ENCODE measurements at regions of chr3 and their contacts with region 1.

Region 1: DNA sequence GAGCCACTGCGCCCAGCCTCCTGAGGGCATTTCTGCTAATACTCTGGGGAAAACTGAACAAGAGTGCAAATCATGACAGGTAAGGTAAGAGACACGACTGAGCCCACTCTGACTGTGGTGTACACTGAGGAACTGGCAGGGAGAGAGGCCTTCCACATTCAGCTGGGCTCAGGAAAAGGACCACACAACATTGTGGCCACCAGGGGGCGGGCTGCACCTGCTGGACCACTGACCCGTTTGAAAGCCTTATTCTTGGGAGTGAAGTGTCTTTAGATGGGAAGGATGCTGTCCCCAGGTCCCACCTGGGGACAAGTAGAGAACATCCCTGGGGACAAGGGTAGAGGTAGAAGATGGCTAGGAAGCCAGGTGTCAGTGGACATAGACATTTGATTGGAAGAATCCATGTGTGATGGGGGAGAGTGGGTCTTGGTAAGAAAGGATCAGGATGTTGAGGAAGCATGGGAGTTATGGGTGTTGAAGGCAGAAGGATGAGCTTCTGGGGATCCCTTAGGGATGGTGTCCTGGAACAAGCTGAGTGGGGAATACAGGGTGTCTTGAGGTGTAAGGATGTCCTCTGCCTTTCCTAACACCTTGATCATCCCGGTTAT is 6.2 kb upstream of the CTDSPL start:
- DNase-seq: peak; percentile 79

Region 2: GRCh38 chr3:37872413-37873160 is 17.1 kb after region 1 on chr3:
- CTCF ChIA-PET with region 1: no interaction called
- POLR2A ChIA-PET with region 1: no interaction called
- DNase-seq: no peak

Region 3: DNA sequence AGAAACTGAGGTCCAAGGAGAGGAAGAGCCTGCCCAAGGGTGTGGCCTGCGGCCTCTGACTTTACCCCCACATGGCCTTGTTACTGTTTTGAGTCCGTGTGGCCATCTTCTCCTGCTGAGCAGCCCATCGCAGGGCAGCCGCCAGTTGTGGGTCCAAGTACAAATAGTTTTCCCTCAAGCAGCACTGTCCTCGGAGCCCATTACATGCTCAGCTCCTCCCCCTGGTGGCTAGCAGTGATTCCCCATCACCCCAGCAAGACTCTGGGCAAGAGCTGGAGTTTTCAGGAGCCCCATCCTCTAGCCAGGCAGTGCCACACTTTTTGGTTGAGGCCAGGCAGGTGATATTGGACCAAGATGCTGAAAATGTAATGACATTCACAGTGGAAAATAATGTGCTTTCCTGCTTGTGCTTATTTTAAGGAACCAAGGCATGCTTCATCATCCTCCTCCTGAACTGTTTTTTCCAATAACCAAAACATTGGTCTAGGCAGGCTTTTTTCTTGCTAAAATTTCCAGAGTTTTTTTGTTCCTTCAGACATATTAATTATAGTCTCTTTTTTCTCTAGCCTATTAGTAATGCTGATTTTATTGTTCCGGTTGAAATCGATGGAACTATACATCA is 111.9 kb after region 1 on chr3:
- CTCF ChIA-PET with region 1: interaction called, 56 read pairs
- POLR2A ChIA-PET with region 1: no interaction called
- DNase-seq: peak; percentile 76

Region 4: DNA sequence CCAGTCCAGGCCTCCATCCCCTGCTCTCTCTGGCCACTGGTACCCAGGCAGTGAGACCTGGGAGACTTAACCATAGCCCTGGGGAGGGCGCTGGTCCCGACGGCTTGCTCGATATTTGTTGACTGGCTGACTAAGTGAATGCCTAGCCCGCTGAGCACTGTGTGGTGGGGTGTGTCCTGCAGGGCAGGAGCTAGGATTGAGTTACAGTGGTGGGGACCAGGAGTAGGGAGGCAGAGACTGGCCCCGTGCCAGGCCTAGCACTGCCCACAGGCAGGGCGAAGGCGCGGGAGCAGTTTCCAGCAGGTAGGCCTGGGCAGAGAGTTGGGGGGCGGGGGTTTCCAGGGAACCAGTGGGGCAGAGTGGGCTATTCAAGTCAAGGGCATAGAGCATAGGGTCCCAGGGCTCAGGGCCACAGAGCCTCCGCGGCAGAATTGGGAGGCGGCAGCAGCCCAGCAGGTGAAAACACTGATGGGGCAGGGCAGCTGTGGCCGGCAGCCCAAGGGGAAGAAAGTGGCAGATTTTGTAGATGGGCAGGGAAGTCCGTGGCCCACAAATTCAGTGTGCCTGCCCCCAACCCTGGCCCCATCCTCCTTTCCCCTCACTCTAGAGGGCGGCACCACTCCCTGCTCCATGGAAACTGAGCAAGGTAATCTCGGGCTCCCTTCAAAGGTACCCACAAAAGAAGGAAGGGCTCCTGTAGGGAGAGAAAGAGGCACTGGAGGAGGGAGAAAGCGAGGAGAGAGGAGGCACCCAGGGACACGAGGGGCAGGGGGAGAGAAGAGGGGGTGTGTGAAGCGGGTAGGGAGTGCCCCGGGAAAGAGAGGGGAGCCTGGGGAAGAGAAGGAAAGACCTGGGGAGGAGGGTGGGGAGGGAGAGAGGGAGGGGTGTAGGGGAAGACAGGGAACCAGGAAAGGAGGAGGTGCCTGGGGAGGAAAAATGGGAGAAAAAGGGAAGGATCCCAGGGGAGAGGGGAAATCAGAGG is 135.4 kb after region 1 on chr3 and contains the start of gene VILL:
- CTCF ChIA-PET with region 1: no interaction called
- POLR2A ChIA-PET with region 1: no interaction called
- DNase-seq: no peak

Measured in HEK293T (cell line).